Mammary epithelial cell (primary cell): ENCODE measurements at regions of chr22 and their contacts with region 1.

Region 1: GRCh38 chr22:30245985-30246901 is at the start of gene LIF:
- DNase-seq: peak; percentile 76
- H3K4me3 ChIP-seq: peak within 1 kb of the TSS; percentile 74 to 80 (median 78)
- H3K27ac ChIP-seq: peak within 1 kb of the TSS; percentile 80
- H3K4me1 ChIP-seq: peaks cover 60% of the 10 kb centered on the region
- H3K27me3 ChIP-seq: no peaks in the 10 kb centered on the region
- CTCF ChIP-seq: peak in 1 of 2 donors; percentile 31
- total RNA-seq, gene LIF: 31.2 to 35.8 TPM

Region 2: GRCh38 chr22:30205281-30206115 is 40.7 kb before region 1 on chr22:
- CTCF ChIA-PET with region 1: interaction called, 3 read pairs
- dilution Hi-C with region 1: loop called (anchors 5 kb)
- in situ Hi-C with region 1: no loop called
- intact Hi-C with region 1: no loop called
- DNase-seq: peak; percentile 99
- H3K4me3 ChIP-seq: no peak overlapping the region
- H3K27ac ChIP-seq: peak overlapping the region; percentile 97
- H3K4me1 ChIP-seq: peaks cover 60% of the 10 kb centered on the region
- H3K27me3 ChIP-seq: no peaks in the 10 kb centered on the region
- CTCF ChIP-seq: no peak

Region 3: GRCh38 chr22:30301995-30302809 is 56.0 kb after region 1 on chr22:
- CTCF ChIA-PET with region 1: no interaction called
- dilution Hi-C with region 1: no loop called
- in situ Hi-C with region 1: no loop called
- intact Hi-C with region 1: no loop called
- DNase-seq: peak; percentile 78
- H3K4me3 ChIP-seq: no peak overlapping the region
- H3K27ac ChIP-seq: peak overlapping the region; percentile 55
- H3K4me1 ChIP-seq: peaks cover 73% of the 10 kb centered on the region
- H3K27me3 ChIP-seq: no peaks in the 10 kb centered on the region
- CTCF ChIP-seq: no peak